Heart left ventricle (tissue), 16 donors: ENCODE measurements at regions of chr16 and their contacts with region 1.

Region 1: GRCh38 chr16:70576431-70577255 is 53.0 kb downstream of the SF3B3 start:
- DNase-seq: peak in 1 of 5 donors; percentile 14
- ATAC-seq: no peak
- H3K4me3 ChIP-seq: no peak overlapping the region
- H3K27ac ChIP-seq: peak overlapping the region in 1 of 12 donors; percentile 38
- H3K4me1 ChIP-seq: peaks cover 0 to 71% (median 54%) of the 10 kb centered on the region in 12 donors
- H3K27me3 ChIP-seq: no peaks in the 10 kb centered on the region
- CTCF ChIP-seq: no peak
- POLR2A ChIP-seq: no peak

Region 2: DNA sequence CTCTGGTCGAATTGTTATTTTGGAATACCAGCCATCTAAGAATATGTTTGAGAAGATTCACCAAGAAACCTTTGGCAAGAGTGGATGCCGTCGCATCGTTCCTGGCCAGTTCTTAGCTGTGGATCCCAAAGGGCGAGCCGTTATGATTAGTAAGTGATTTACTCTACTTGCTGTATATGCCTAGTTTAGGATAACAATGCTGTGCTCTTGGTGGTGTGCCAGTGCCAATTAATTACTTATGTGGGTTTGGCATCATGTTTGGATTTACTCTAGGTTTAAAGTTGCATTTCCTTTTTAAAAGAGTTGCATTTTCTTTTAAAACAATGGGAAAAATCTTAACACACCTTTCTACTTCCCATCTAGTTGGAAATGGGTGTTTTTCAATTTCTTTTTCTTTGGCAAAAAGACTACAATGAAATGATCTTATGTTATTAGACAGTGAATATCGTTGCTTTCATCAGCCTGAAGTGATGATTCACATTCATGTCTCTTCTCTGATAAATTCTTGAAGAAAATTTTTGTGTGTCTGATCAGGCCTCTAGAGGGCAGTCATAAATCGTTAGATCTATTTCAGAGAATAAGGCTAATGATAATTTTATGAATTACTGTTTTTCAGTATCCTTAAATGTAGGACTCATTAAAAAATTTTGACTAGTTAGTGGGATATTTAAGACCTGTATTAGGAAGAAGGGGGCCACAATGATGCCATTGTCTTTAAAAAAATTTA is 47.4 kb before region 1 on chr16:
- intact Hi-C with region 1: loop called in 1 of 10 experiments (anchors 5 kb)
- DNase-seq: no peak
- ATAC-seq: no peak
- H3K4me3 ChIP-seq: no peak overlapping the region
- H3K27ac ChIP-seq: no peak overlapping the region
- H3K4me1 ChIP-seq: peaks cover 3 to 52% (median 35%) of the 10 kb centered on the region in 12 donors
- H3K27me3 ChIP-seq: no peaks in the 10 kb centered on the region
- CTCF ChIP-seq: peak; percentile 35 to 71 (median 53)
- POLR2A ChIP-seq: no peak

Region 3: GRCh38 chr16:70534971-70535370 is 41.7 kb before region 1 on chr16:
- intact Hi-C with region 1: loop called in 1 of 10 experiments (anchors 5 kb)
- DNase-seq: no peak
- ATAC-seq: no peak
- H3K4me3 ChIP-seq: no peak overlapping the region
- H3K27ac ChIP-seq: no peak overlapping the region
- H3K4me1 ChIP-seq: peaks cover 0 to 10% (median 0%) of the 10 kb centered on the region in 12 donors
- H3K27me3 ChIP-seq: no peaks in the 10 kb centered on the region
- CTCF ChIP-seq: no peak
- POLR2A ChIP-seq: no peak

Region 4: GRCh38 chr16:70589998-70590471 is 13.4 kb after region 1 on chr16:
- intact Hi-C with region 1: loop called in 1 of 10 experiments (anchors 2 kb)
- DNase-seq: peak; percentile 46 to 66 (median 59)
- ATAC-seq: peak in 3 of 4 donors; percentile 27 to 60 (median 42)
- H3K4me3 ChIP-seq: peak overlapping the region in 4 of 12 donors; percentile 4 to 34 (median 19)
- H3K27ac ChIP-seq: peak overlapping the region in 10 of 12 donors; percentile 4 to 73 (median 48)
- H3K4me1 ChIP-seq: peaks cover 3 to 57% (median 32%) of the 10 kb centered on the region in 12 donors
- H3K27me3 ChIP-seq: no peaks in the 10 kb centered on the region
- CTCF ChIP-seq: no peak
- POLR2A ChIP-seq: no peak

Region 5: DNA sequence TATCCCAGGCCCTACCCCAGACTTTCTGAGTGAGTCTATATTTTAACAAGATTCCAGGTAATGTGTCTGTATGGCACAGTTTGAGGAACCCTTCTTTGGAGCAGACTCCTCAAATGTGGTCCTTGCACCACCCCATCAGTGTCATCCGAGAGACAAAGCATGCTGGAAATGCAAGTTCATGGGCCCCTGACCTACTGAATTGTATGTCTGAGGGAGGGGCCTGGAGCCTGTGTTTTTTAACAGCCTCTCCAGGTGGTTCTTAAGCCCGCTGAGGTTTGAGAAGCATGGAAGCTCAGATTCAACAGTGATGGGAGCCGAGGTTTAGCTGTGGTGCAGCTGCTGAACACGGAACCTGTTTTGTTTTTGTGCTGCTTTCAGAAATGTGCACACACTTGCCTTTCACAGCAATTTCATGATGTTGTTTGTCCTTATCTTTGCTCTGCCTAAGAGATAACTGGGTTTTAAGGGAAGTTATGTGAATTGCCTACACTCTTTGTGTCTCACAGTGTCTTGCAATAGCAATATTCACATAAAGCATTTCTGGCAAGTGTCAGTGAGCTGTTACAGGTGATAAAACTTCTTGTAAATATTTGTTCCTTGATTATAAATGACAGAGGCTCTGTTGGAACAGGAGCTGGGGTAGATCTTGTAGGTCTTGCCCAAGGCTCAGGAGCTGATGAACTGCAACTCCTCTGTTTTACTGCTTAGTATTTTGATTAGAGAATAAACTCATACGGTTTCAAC is 37.7 kb after region 1 on chr16:
- intact Hi-C with region 1: no loop called
- DNase-seq: no peak
- ATAC-seq: no peak
- H3K4me3 ChIP-seq: no peak overlapping the region
- H3K27ac ChIP-seq: no peak overlapping the region
- H3K4me1 ChIP-seq: peaks cover 0 to 12% (median 2%) of the 10 kb centered on the region in 12 donors
- H3K27me3 ChIP-seq: no peaks in the 10 kb centered on the region
- CTCF ChIP-seq: no peak
- POLR2A ChIP-seq: no peak

Region 6: DNA sequence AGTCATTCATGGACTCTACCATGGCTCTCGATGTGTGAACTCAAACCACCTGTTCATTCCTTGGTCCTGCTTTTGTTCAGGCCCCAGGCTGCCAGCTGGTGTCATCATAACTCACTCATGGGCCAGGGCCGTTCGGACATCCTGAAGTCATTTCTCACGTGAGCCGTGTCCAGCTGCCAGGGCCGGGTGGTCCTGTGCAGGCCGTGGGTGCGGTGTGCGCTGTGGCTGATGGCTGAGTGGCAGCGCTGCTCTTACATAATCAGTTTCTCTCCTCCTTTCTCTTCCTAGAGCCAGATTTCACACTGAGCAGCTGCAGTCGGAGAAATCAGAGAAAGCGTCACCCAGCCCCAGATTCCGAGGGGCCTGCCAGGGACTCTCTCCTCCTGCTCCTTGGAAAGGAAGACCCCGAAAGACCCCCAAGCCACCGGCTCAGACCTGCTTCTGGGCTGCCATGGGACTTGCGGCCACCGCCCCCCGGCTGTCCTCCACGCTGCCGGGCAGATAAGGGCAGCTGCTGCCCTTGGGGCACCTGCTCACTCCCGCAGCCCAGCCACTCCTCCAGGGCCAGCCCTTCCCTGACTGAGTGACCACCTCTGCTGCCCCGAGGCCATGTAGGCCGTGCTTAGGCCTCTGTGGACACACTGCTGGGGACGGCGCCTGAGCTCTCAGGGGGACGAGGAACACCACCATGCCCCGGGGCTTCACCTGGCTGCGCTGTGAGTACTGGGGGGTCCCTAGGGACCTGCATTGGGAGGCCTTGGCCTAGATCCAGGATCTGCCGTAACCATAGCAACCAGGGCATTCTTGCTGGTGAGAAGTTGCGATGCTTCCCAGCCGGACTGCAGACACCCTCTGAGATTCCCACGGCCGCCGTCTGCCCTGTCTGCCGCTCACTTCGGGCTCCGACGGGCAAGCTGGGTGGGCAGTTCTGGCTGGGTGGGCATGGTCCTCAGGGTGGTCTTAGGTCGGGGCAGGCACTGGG is 69.9 kb after region 1 on chr16 and contains the start of gene IL34:
- intact Hi-C with region 1: loop called in 3 of 10 experiments (anchors 5 to 10 kb)
- DNase-seq: peak in 1 of 5 donors; percentile 45
- ATAC-seq: peak in 3 of 4 donors; percentile 38 to 70 (median 62)
- H3K4me3 ChIP-seq: peak within 1 kb of the TSS in 7 of 12 donors; percentile 7 to 48 (median 16)
- H3K27ac ChIP-seq: peak within 1 kb of the TSS in 5 of 12 donors; percentile 33 to 66 (median 58)
- H3K4me1 ChIP-seq: peaks cover 0 to 15% (median 2%) of the 10 kb centered on the region in 12 donors
- H3K27me3 ChIP-seq: no peaks in the 10 kb centered on the region
- CTCF ChIP-seq: no peak
- POLR2A ChIP-seq: no peak
- total RNA-seq, gene IL34: 0.49 to 6.5 (median 2.7) TPM

Region 7: DNA sequence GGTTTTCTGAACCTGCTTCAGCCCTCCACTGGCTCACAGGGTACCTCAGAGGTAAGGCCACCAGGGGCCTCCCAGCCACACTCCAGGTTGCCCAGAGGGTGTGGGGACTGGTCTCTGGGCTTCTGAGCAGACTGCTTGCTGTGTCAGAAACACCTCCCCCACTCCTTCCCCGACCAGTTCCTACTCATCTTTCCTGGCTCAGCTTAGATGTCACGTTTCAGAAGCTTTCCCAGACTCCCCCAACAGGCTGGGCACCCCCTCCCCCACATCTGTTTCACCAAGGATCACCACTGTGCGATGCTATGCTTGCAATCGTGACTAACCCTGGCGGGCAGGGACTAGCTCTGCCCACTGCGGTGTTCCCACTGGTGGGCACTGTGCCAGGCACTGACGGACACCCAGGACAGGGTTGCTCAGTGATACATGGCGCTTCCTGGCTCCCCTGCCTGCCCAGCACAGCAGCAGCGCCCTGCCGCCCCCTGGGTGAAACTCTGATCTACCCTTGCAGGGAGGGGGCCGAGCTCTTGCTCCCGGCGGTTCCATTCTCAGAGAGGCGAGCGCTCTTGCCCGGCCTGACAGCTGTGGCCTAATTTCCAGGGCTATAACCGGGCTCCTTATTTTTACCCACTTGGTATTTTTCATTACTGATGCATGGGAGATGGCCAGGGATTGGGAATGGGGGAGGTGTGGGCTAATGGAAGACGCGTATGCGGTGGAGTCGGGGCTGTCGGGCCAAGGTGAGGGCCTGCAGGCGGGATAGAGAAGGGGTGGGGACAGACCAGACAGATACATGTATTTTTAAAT is 138.6 kb after region 1 on chr16:
- intact Hi-C with region 1: no loop called
- DNase-seq: peak; percentile 74 to 94 (median 87)
- ATAC-seq: peak; percentile 86 to 93 (median 90)
- H3K4me3 ChIP-seq: peak overlapping the region in 3 of 12 donors; percentile 3 to 31 (median 16)
- H3K27ac ChIP-seq: peak overlapping the region in 11 of 12 donors; percentile 60 to 93 (median 70)
- H3K4me1 ChIP-seq: peaks cover 0 to 29% (median 19%) of the 10 kb centered on the region in 12 donors
- H3K27me3 ChIP-seq: no peaks in the 10 kb centered on the region
- CTCF ChIP-seq: peak in 2 of 12 donors; percentile 8 to 12
- POLR2A ChIP-seq: no peak